Heart right ventricle (tissue), 16 donors: ENCODE measurements at regions of chr17 and their contacts with region 1.

Region 1: DNA sequence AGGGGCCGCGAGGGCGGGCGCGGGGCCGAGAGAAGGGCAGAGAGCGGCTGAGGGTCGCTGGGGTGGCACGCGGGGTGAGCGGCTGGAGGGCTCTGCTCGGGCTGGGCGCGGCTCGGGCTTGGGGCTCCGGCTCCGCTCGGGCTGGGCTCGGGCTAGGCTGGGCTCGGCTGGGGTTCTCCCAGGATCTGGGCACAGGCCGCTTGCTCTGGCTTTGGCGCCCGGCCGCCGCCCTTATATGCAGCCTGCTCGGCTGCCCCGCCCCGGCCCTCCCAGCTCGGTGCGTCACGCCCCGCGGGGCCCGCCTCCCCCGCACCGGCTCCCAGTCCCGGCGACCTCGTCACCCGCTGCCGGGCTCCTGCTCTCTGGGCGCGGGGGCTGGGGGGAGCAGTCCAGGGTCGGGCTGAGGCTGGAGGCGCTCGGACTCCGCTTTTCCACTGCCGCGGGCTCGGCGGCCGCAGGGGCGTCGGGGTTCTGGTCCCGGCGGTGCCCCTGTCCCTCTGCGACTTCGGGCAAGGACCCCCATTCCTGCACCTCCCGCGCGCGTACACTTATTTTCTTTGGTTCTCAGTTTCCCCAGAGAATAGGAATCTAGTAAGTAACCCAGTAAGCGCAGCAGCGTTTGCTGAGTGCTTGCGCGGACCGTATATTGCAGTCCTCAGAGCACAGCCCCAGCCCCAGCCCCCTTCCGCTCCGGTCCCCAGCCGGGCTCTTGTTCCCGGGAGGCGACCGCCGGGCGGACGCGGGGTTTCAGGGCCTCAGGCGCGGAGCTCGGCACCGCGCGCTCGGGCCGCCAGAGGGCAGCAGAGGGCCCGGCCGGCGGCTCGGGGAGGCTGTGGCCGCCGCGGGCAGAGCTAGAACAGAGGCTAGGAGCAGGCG is at the start of gene RASD1:
- DNase-seq: peak; percentile 89 to 94
- ATAC-seq: peak; percentile 88 to 95 (median 92)
- H3K4me3 ChIP-seq: peak within 1 kb of the TSS; percentile 38 to 75 (median 66)
- H3K27ac ChIP-seq: peak within 1 kb of the TSS; percentile 83 to 97 (median 90)
- H3K4me1 ChIP-seq: peaks cover 9 to 54% (median 41%) of the 10 kb centered on the region in 9 donors
- H3K27me3 ChIP-seq: peaks cover 0 to 22% (median 0%) of the 10 kb centered on the region in 7 donors
- CTCF ChIP-seq: peak; percentile 93 to 100 (median 98)
- total RNA-seq, gene RASD1: 2.2 to 67.7 (median 6.8) TPM

Region 2: GRCh38 chr17:17416007-17416399 is 80.4 kb before region 1 on chr17:
- intact Hi-C with region 1: loop called in 3 of 10 experiments (anchors 1 to 5 kb)
- DNase-seq: no peak
- ATAC-seq: peak in 2 of 8 donors; percentile 21 to 25
- H3K4me3 ChIP-seq: no peak overlapping the region
- H3K27ac ChIP-seq: peak overlapping the region in 9 of 10 donors; percentile 14 to 77 (median 71)
- H3K4me1 ChIP-seq: peaks cover 2 to 69% (median 44%) of the 10 kb centered on the region in 9 donors
- H3K27me3 ChIP-seq: no peaks in the 10 kb centered on the region
- CTCF ChIP-seq: no peak

Region 3: GRCh38 chr17:17551361-17551760 is 54.9 kb after region 1 on chr17:
- intact Hi-C with region 1: loop called in 1 of 10 experiments (anchors 2 kb)
- DNase-seq: peak; percentile 71 to 72
- ATAC-seq: peak; percentile 73 to 88 (median 82)
- H3K4me3 ChIP-seq: no peak overlapping the region
- H3K27ac ChIP-seq: peak overlapping the region; percentile 56 to 88 (median 80)
- H3K4me1 ChIP-seq: peaks cover 0 to 65% (median 48%) of the 10 kb centered on the region in 9 donors
- H3K27me3 ChIP-seq: no peaks in the 10 kb centered on the region
- CTCF ChIP-seq: no peak

Region 4: DNA sequence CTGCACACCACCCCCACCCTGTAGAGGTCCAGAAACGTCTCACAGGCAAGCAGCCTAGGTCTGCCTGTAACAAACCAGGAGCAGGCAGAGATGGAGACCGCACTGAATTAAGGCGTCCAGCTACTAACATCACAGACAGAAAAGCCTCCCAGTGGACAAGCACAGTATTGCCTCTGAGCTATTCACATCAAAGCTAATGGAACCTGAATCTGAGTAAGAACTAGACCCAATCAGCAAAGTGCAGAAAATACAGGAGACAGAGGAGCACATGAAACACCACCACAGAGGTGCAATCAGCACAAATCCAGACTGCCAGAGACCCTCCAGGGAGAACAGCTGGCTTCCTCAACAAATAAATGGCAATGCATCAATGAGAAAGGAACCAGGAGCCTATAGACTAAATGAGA is 117.3 kb after region 1 on chr17:
- intact Hi-C with region 1: loop called in 2 of 10 experiments (anchors 10 kb)
- DNase-seq: peak in 1 of 2 donors; percentile 65
- ATAC-seq: peak; percentile 71 to 93 (median 88)
- H3K4me3 ChIP-seq: no peak overlapping the region
- H3K27ac ChIP-seq: no peak overlapping the region
- H3K4me1 ChIP-seq: peaks cover 0 to 15% (median 5%) of the 10 kb centered on the region in 9 donors
- H3K27me3 ChIP-seq: no peaks in the 10 kb centered on the region
- CTCF ChIP-seq: peak; percentile 35 to 76 (median 71)

Region 5: GRCh38 chr17:17641621-17642409 is 145.4 kb after region 1 on chr17:
- intact Hi-C with region 1: loop called in 8 of 10 experiments (anchors 2 to 10 kb)
- DNase-seq: peak; percentile 72 to 85
- ATAC-seq: peak; percentile 80 to 94 (median 87)
- H3K4me3 ChIP-seq: no peak overlapping the region
- H3K27ac ChIP-seq: peak overlapping the region in 1 of 10 donors; percentile 31
- H3K4me1 ChIP-seq: peaks cover 0 to 14% (median 0%) of the 10 kb centered on the region in 9 donors
- H3K27me3 ChIP-seq: peaks cover 0 to 6% (median 0%) of the 10 kb centered on the region in 7 donors
- CTCF ChIP-seq: peak; percentile 81 to 94 (median 89)